ENCODE measurements at regions of chr6 and their contacts with region 1.

Region 1: GRCh38 chr6:31541658-31542521 is at the start of gene DDX39B:
- DNase-seq: peak; percentile 83 to 97
- H3K4me3 ChIP-seq: peak within 1 kb of the TSS; percentile 76 to 88
- H3K27ac ChIP-seq: peak within 1 kb of the TSS; percentile 94 to 95
- H3K4me1 ChIP-seq: peaks cover 13 to 32% of the 10 kb centered on the region in 2 donors
- H3K27me3 ChIP-seq: no peaks in the 10 kb centered on the region
- CTCF ChIP-seq: peak in 1 of 3 experiments; percentile 1
- total RNA-seq, gene DDX39B: 134 TPM

Region 2: DNA sequence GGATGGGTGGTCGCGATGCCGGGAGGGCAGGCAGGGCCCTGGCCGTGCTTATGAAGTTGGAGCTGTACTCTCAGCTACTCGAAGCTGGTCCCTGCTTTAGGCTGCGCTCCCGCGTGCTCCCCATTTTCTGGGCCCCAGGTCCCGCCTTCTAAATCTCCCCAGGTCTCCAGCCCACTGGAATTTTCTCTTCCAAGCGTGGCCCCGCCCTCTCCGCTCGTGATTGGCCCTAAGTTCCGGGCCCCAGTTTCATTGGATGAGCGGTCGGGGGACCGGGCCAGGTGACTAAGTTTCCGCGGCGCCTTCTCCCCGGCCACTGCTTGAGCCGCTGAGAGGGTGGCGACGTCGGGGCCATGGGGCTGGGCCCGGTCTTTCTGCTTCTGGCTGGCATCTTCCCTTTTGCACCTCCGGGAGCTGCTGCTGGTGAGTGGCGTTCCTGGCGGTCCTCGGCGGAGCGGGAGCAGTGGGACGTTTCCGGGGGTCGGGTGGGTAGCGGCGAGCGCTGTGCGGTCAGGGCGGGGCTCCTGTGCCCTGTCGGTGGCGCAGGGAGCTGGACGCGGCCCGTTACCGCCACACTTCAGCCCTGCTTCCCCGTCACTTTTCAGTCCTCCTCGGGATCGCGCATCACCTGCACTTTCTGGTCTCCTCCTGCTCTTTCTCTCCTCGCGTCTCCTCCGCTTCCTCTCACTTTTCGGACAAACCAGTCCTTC is 138.5 kb before region 1 on chr6 and contains the start of gene MICA:
- intact Hi-C with region 1: loop called (anchors 5 kb)
- DNase-seq: peak; percentile 74 to 96
- H3K4me3 ChIP-seq: peak within 1 kb of the TSS; percentile 68 to 76
- H3K27ac ChIP-seq: peak within 1 kb of the TSS; percentile 92 to 95
- H3K4me1 ChIP-seq: peaks cover 12 to 26% of the 10 kb centered on the region in 2 donors
- H3K27me3 ChIP-seq: no peaks in the 10 kb centered on the region
- CTCF ChIP-seq: peak in 2 of 3 experiments; percentile 24 to 39
- total RNA-seq, gene MICA: 19.2 TPM

Region 3: DNA sequence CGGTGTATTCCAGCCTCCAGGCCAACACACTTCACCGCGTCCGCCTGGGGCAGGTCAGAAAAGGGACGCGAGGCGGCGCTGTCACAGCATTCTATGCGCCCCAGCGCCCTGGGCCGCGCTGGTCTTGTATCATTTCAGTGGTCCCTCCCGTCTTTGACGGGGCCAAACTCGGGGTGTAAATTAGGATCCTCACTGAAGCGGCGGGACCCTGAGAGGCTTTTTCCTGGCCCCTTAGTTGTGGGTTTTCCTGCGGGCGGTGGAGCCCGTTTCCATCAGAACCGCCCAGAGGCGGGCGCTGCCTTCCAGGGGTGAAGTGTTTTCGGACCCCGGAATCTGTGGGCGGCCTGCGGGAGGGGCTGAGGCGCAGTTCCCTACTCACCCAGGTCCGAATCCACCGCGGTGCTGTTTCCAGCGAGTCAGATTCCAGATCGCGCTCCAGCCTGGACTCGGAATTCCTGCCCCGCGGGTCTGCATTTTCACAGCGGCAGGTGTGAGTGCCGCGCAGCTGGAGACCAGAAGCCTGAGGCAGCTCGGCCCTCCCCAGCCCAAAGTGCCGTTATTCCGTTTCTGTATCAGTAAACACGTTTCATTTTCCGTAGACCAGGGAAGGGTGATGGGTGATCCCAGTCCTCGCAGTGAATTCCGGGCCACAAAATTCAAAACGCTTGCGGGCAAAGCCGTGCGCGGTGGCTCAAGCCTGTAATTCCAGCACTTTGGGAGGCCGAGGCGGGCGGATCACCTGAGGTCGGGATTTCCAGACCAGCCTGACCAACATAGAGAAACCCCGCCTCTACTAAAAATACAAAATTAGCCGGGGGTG is 47.8 kb before region 1 on chr6:
- intact Hi-C with region 1: loop called (anchors 2 kb)
- DNase-seq: peak in 1 of 2 donors; percentile 88
- H3K4me3 ChIP-seq: peak overlapping the region; percentile 72 to 80
- H3K27ac ChIP-seq: peak overlapping the region; percentile 67 to 79
- H3K4me1 ChIP-seq: peaks cover 0 to 5% of the 10 kb centered on the region in 2 donors
- H3K27me3 ChIP-seq: no peaks in the 10 kb centered on the region
- CTCF ChIP-seq: peak; percentile 64 to 79 (median 78)

Region 4: DNA sequence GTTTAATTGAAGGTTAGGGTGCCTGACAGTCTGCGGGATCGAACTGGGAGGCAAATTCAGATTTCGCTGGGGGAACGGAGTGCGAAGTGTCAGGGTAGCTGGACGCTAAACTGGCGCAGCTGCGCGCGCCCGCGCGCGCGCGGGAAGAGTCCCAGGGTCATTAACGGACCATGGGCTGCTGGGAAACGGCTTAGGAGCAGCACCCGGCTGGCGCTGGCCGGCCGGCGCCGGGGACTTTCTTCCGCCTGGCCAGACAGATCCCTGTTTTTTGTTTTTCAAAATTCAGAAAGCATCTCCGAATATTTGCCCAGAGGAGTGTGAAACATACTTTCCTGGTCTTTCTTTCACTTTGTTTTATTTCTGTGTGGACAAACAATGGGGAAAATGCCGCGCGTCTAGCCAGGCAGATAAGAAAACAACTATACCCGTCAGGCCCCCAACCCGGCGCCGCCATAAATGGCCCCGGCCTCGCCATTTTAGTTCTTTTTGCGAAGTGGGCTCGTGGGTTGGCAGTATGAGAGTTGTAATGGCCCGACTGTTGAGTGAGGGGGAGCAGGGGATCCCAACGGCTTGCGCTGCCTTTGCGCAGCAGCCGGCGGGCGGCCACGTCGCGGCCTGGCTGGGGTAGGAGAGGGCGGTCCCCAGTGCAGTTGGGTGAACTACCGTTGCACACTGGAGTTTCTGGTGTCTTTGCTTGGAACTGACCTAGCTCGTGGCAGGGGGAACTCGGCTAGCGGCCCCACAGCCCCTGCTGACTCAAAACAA is 292.7 kb after region 1 on chr6:
- intact Hi-C with region 1: loop called (anchors 10 kb)
- DNase-seq: peak in 1 of 2 donors; percentile 91
- H3K4me3 ChIP-seq: peak overlapping the region; percentile 67 to 80
- H3K27ac ChIP-seq: peak overlapping the region; percentile 84 to 90
- H3K4me1 ChIP-seq: peaks cover 21 to 43% of the 10 kb centered on the region in 2 donors
- H3K27me3 ChIP-seq: no peaks in the 10 kb centered on the region
- CTCF ChIP-seq: no peak

Region 5: GRCh38 chr6:32190054-32190851 is 648.4 kb after region 1 on chr6 and contains the start of gene PBX2:
- intact Hi-C with region 1: loop called (anchors 10 kb)
- DNase-seq: peak; percentile 66 to 93
- H3K4me3 ChIP-seq: peak within 1 kb of the TSS; percentile 67 to 98
- H3K27ac ChIP-seq: peak within 1 kb of the TSS; percentile 80 to 99
- H3K4me1 ChIP-seq: peaks cover 5 to 25% of the 10 kb centered on the region in 2 donors
- H3K27me3 ChIP-seq: no peaks in the 10 kb centered on the region
- CTCF ChIP-seq: no peak
- total RNA-seq, gene PBX2: 18.1 TPM

Region 6: DNA sequence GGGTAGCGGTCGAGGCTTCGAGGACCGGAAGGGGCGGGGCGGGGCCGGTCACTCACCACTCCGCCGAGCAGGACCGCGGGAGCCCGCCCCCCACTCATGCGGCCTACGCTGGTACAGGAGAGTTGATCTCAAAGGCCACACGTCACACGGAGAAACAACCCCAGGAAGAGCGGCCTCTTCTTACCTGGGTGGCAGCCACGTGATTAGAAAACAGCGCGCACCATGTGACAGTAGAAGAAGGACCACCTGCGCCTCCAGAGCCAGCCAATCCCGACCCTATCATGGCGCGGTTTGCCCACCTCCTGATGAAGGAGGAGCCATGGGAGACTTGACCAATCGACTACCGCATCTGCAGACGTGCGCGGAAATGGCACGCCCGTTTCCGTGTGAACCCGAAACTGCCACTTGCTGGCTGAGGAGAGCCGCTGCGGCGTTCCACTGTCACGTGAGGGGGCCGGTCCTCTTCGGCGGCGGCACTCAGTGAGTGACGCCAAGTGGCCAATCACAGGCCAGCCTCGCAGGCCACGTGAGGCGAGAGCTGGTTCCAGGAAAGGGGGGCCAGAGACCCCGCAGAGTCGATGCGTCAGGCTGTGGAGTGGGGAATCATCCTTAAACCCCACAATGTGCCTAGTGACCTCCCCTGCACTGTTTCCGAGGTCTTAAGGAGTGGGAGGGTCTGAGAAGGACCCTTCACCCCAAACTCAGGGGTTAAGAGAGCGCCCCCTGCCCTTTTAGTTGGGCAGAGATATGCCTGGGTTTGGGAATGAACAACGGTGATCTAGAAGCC is 1876.2 kb after region 1 on chr6 and contains the start of gene CUTA:
- intact Hi-C with region 1: loop called (anchors 10 kb)
- DNase-seq: peak; percentile 99 to 100
- H3K4me3 ChIP-seq: peak within 1 kb of the TSS; percentile 82 to 85
- H3K27ac ChIP-seq: peak within 1 kb of the TSS; percentile 95
- H3K4me1 ChIP-seq: peaks cover 13 to 30% of the 10 kb centered on the region in 2 donors
- H3K27me3 ChIP-seq: no peaks in the 10 kb centered on the region
- CTCF ChIP-seq: peak in 2 of 3 experiments; percentile 22 to 32
- total RNA-seq, gene CUTA: 77.2 TPM